ENCODE measurements at regions of chr16 and their contacts with region 1.

Region 1: DNA sequence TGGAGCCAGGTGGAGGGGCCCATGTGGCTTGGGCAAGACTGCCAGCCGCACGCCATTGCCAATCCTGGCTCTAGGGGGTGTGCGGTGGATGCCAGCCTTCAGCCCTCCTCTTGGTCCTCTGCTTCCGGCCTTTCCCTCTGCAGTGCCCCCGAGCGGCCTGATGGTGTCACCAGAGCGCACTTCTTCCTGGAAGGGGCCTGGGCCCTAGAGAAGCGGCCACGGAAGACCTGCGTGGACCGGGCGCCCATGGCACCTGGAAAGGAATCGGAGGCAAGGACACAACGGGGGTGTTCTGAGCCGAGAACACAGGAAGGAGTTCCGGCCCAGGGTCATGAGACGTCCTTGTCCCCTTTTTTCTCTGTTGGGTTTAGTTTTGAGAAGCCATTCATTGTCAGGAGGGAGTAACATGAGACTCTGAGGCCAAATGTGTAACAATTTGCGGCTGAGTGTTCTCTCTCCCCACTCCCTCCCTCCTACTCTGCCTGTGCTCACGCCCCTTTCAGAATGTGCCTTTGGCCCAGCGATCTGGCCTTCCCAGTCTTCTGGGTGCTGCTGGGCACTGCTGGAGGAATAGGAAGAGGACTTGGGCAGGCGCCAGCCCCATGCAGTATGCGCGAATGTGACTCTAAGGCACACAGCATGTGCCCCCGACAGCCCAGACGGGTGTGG is 92.8 kb downstream of the IRX3 start:
- DNase-seq: peak; percentile 83
- ATAC-seq: peak; percentile 87 to 93

Region 2: GRCh38 chr16:54266363-54266955 is 72.7 kb after region 1 on chr16:
- intact Hi-C with region 1: loop called in 1 of 2 experiments (anchors 10 kb)
- DNase-seq: no peak
- ATAC-seq: peak in 1 of 2 donors; percentile 60

Region 3: GRCh38 chr16:54286994-54287757 is 93.4 kb after region 1 on chr16:
- intact Hi-C with region 1: no loop called
- DNase-seq: no peak
- ATAC-seq: no peak

Measured in left cardiac atrium (tissue), 4 donors.